ENCODE measurements at regions of chr11 and their contacts with region 1.

Region 1: GRCh38 chr11:123478352-123478987 is 48.4 kb downstream of the GRAMD1B start:
- DNase-seq: peak; percentile 63
- H3K4me3 ChIP-seq: no peak overlapping the region
- H3K27ac ChIP-seq: no peak overlapping the region
- H3K27me3 ChIP-seq: no peaks in the 10 kb centered on the region
- CTCF ChIP-seq: peak; percentile 74

Region 2: GRCh38 chr11:123103326-123103980 is 375.0 kb before region 1 on chr11:
- CTCF ChIA-PET with region 1: interaction called, 11 read pairs
- POLR2A ChIA-PET with region 1: no interaction called
- DNase-seq: peak; percentile 34
- H3K4me3 ChIP-seq: no peak overlapping the region
- H3K27ac ChIP-seq: no peak overlapping the region
- H3K27me3 ChIP-seq: no peaks in the 10 kb centered on the region
- CTCF ChIP-seq: peak; percentile 64

Region 3: GRCh38 chr11:123301696-123302400 is 176.6 kb before region 1 on chr11:
- CTCF ChIA-PET with region 1: interaction called, 50 read pairs
- POLR2A ChIA-PET with region 1: no interaction called
- DNase-seq: no peak
- H3K4me3 ChIP-seq: peak overlapping the region; percentile 50
- H3K27ac ChIP-seq: no peak overlapping the region
- H3K27me3 ChIP-seq: peaks cover 10% of the 10 kb centered on the region
- CTCF ChIP-seq: peak; percentile 64

Region 4: DNA sequence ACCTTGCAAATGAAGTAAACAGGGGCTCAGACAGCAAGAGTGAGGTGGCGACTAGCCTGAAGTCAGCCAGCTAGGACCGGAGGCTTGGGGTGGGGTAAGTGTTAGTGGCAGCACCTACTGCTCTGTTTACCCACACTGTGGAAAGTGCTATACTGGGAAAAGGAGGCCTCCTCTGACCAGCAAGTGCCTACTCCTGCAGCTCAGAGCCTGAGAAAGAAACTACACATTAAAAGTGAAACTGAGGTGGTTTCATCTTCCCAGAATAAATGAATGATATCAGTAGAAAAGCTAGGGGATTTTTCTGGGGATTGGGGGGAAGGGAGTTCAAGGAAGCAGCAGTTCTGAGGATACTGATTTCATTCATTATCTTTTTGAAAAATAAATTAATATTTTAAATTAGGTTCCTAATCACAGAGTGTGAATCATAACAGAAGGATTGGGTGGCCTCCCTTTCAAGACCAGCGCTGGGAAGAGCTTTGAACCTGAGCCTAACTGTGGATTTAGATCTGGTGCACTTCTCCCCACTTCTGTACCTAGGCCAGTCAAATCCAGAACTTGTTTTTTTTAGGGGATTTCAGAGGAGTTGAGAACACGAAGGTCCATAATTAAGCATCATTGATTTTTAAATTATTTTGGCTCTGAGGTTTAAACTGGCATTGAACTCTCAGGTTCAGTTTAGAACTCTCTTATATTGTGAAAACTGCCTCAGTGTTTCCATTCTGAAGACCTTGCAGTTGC is 96.5 kb before region 1 on chr11:
- CTCF ChIA-PET with region 1: no interaction called
- POLR2A ChIA-PET with region 1: no interaction called
- DNase-seq: no peak
- H3K4me3 ChIP-seq: no peak overlapping the region
- H3K27ac ChIP-seq: no peak overlapping the region
- H3K27me3 ChIP-seq: peaks cover 21% of the 10 kb centered on the region
- CTCF ChIP-seq: no peak

Region 5: GRCh38 chr11:123407130-123407995 is 71.1 kb before region 1 on chr11:
- CTCF ChIA-PET with region 1: interaction called, 172 read pairs
- POLR2A ChIA-PET with region 1: interaction called, 3 read pairs
- DNase-seq: peak; percentile 29
- H3K4me3 ChIP-seq: no peak overlapping the region
- H3K27ac ChIP-seq: no peak overlapping the region
- H3K27me3 ChIP-seq: peaks cover 21% of the 10 kb centered on the region
- CTCF ChIP-seq: peak; percentile 78